Heart right ventricle (tissue), 16 donors: ENCODE measurements at regions of chr11 and their contacts with region 1.

Region 1: GRCh38 chr11:76318744-76319384 is 62.1 kb downstream of the THAP12 start:
- DNase-seq: peak; percentile 79 to 83
- ATAC-seq: peak; percentile 83 to 94 (median 88)
- H3K4me3 ChIP-seq: no peak overlapping the region
- H3K27ac ChIP-seq: no peak overlapping the region
- H3K4me1 ChIP-seq: peaks cover 0 to 19% (median 13%) of the 10 kb centered on the region in 9 donors
- H3K27me3 ChIP-seq: peaks cover 0 to 32% (median 19%) of the 10 kb centered on the region in 7 donors
- CTCF ChIP-seq: peak; percentile 80 to 97 (median 90)

Region 2: DNA sequence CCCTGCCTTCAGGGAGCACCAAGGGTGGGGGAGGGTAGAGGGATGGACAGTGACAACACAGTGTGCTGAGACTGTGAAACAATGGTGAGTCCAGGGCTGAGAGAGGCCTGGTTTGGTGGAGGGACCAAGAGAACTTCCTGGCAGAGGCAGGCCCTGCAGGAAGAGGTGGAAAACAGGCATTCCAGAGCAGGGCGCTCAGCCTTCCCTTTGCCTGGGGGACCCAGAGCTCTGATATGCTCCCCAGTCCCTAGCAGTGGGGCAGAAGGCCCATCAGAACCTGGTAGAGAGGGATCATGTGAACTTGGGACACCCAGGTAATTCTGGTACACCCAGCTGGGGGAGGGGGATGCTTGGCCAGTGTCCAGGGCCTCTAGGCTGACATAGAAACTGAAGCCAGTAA is 521.1 kb before region 1 on chr11:
- intact Hi-C with region 1: loop called in 8 of 10 experiments (anchors 2 to 10 kb)
- DNase-seq: no peak
- ATAC-seq: no peak
- H3K4me3 ChIP-seq: no peak overlapping the region
- H3K27ac ChIP-seq: no peak overlapping the region
- H3K4me1 ChIP-seq: peaks cover 0 to 31% (median 13%) of the 10 kb centered on the region in 9 donors
- H3K27me3 ChIP-seq: no peaks in the 10 kb centered on the region
- CTCF ChIP-seq: no peak

Region 3: DNA sequence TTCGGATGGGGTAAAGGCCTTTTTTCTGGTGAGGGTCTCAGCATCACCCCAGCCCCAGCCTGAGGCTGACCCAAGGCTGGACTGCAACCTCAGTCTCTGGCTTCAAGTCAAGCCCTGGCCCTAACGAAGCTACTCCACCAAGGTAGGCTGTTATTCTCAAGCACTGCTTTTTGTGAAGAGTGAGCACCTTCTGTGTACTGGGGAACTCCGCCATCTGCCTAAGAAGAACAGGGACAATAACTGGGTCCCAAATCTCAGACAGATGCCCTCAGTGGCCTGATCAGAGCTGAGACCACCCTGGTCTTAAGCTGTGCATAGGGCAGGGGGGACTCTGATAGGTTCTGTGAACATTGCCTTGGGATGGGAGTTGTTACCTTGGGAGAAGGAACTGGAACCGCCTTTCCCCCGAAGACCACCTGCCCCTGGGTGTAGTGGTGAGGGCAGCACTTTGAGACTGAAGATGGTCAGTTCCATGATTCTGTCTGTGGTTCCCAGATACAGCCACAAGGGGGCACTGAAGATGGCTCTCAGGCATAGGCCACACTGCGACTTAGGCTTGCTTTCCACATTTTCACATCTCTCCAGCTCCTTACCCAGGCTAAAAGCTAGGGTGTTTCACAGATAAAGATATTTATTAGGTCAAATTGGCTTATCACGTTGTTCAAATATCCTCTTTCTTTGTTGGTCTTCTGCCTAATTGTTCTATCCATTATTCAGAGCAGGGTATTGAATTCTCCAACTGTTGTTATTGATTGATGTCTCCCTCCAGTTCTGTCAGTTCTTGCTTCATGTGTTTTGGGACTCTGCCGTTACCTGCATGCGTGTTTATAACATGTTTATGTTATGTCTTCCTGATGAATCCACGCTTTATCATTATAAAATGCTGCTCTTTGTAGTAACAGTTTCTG is 515.7 kb before region 1 on chr11:
- intact Hi-C with region 1: loop called in 8 of 10 experiments (anchors 2 to 10 kb)
- DNase-seq: peak in 1 of 2 donors; percentile 82
- ATAC-seq: peak; percentile 75 to 94 (median 88)
- H3K4me3 ChIP-seq: no peak overlapping the region
- H3K27ac ChIP-seq: peak overlapping the region in 1 of 10 donors; percentile 26
- H3K4me1 ChIP-seq: peaks cover 0 to 22% (median 0%) of the 10 kb centered on the region in 9 donors
- H3K27me3 ChIP-seq: no peaks in the 10 kb centered on the region
- CTCF ChIP-seq: peak; percentile 80 to 95 (median 92)

Region 4: DNA sequence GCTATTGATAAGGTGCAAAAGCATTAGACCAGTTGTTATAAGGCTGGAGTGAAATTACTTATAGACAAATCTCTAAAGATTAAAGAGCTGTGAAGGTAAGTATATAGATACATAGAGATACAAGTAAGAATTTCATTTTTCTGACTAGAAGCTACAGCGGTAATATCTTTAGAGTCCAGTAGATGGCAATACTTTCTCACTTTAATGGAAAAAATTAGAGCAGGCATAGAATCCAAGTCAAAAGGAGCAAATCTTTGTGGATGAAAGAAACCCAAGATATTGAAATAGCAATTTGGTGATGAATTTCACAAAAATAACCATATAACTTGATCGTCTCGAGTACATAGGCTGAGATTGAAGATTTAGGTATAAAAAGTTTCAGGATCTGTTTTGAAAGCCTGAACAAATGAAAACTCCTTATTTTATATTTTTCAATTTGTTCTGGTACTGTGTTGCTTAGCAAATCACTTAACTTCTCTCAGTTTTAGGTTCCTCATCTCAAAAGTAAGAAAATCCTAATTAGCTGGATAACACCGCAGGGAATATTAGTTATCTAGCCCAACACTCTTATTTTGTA is 421.9 kb before region 1 on chr11:
- intact Hi-C with region 1: loop called (anchors 2 to 10 kb)
- DNase-seq: no peak
- ATAC-seq: peak in 4 of 8 donors; percentile 29 to 65 (median 49)
- H3K4me3 ChIP-seq: no peak overlapping the region
- H3K27ac ChIP-seq: no peak overlapping the region
- H3K4me1 ChIP-seq: peaks cover 0 to 35% (median 10%) of the 10 kb centered on the region in 9 donors
- H3K27me3 ChIP-seq: no peaks in the 10 kb centered on the region
- CTCF ChIP-seq: peak; percentile 58 to 85 (median 73)